ENCODE measurements at regions of chr6 and their contacts with region 1.

Region 1: DNA sequence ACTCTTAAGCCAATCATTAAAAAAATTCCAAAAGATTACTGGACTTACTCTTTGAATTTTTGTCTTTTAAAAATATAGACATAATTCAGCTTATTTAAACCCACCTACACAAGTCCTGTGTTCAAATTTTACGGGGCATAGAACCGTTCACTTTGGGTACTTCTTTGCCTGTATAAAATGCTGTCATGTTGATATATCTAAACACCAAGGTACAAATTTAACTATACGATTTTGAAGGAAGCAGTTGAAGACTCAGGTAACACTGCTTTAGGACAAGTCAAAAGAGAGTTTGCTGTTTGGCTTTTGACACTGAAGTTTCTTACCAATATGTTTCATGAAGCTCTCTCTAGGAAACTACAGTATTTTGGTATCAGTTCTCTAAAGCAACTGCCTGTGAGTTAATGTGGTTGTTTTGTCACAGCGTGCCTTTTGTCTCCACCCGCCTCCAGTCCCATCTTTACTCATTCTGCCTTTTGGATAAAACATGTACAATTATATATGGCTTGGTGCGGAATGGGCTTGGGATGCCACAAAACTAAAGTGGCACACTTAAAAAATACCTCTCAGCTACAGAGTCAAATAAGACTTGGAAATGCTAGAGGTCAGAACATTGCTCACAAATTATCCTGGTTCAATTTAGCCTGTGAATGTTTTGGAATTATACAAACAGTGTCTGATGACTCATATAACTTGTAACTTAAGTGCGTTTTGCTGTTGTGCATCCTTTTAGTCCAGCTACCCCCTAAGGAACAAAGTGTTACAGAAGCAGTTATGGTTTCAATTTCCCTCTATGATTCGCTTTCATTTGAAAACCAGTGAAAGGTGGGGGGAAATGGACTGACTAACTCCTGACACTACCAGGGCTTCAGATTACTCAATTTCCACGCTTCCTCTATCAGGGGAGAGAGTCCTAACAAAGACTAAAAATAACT is 38.7 kb downstream of the RGS17 start:
- DNase-seq: peak; percentile 43
- ATAC-seq: peak; percentile 91
- H3K4me3 ChIP-seq: 0 out of 2 replicates have a peak overlapping the region, but pooled peaks have one; percentile 44
- H3K27ac ChIP-seq: peak overlapping the region; percentile 10; the same call in 1 of the 2 replicates
- H3K4me1 ChIP-seq: no peaks in the 10 kb centered on the region; the same call in 1 of the 2 replicates
- H3K27me3 ChIP-seq: no peaks in the 10 kb centered on the region
- CTCF ChIP-seq: no peak
- EP300 ChIP-seq: peak in 1 of 2 experiments; percentile 45; a peak in 2 of 4 replicates
- POLR2A ChIP-seq: no peak
- RAD21 ChIP-seq: no peak

Region 2: DNA sequence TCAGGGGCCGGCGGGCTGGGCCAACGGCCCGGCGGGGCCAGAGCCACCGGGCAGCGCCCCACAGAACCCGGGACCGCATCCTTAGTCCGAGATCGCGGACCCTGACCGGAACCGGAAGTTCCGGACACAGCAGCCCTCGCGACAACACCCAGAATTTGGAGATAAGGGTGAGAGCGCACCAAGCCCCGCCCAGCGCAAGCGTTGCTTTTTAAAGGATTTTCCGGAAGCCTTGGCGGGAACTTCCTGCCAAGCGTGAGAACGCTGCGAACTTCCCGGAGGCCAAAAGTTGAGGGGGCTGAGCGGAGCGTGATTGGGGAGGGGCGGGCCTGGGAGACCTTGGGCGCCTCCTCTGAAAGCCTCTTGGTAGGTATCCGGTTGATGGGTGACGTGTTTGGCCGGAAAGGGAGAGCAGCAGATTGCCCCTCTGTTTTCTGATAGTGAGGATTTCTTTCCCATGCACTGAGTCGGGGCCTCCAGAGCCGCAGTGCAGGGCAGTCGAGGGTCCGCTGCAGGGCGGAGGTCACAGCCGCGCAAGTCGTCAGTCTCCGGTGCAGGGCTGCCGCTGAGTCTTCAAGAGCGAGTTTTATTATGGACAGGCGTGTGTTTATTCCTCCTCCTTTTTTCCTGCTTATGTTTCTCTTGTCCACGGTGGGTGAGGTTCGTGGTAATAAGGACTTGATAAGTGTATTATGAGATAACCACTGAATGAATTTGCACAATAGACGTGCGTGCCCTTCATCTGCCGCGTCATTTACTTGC is 89.6 kb before region 1 on chr6 and contains the start of gene MTRF1L:
- CTCF ChIA-PET with region 1: interaction called, 6 read pairs
- POLR2A ChIA-PET with region 1: no interaction called
- RAD21 ChIA-PET with region 1: no interaction called
- SMC1A ChIA-PET with region 1: no interaction called
- in situ Hi-C with region 1: no loop called
- intact Hi-C with region 1: loop called (anchors 2 kb)
- DNase-seq: peak; percentile 82
- ATAC-seq: peak; percentile 96
- H3K4me3 ChIP-seq: peak within 1 kb of the TSS; percentile 84
- H3K27ac ChIP-seq: peak within 1 kb of the TSS; percentile 61
- H3K4me1 ChIP-seq: no peaks in the 10 kb centered on the region
- H3K27me3 ChIP-seq: no peaks in the 10 kb centered on the region
- CTCF ChIP-seq: no peak
- EP300 ChIP-seq: no peak
- POLR2A ChIP-seq: peak; percentile 66; the same call in 1 of the 2 replicates
- RAD21 ChIP-seq: no peak
- polyA plus RNA-seq, gene MTRF1L: 5.1 to 9.0 TPM

Region 3: DNA sequence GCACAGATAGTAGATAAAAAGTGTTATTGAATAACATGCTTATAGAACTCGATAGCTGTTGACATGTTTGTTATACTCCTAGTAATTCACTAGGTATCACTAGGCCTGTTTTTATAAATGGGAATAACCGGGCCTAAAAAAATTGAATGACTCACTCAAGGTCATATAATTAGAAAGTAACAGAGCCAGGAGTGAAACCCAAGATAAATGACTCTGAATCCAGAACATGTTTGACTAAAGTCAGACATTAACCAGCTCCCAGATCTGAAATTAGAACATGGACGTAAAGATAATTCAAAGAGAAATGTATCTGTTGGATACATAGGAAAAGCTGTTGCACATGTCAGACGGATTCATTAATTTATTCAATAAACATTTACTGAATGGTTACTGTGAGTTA is 11.9 kb after region 1 on chr6:
- CTCF ChIA-PET with region 1: interaction called, 7 read pairs
- POLR2A ChIA-PET with region 1: interaction called, 4 read pairs
- RAD21 ChIA-PET with region 1: interaction called, 5 read pairs
- SMC1A ChIA-PET with region 1: interaction called, 15 read pairs
- in situ Hi-C with region 1: no loop called
- intact Hi-C with region 1: no loop called
- DNase-seq: no peak
- ATAC-seq: no peak; the same call in none of the 3 replicates
- H3K4me3 ChIP-seq: no peak overlapping the region
- H3K27ac ChIP-seq: no peak overlapping the region
- H3K4me1 ChIP-seq: no peaks in the 10 kb centered on the region
- H3K27me3 ChIP-seq: no peaks in the 10 kb centered on the region
- CTCF ChIP-seq: no peak
- EP300 ChIP-seq: no peak
- POLR2A ChIP-seq: no peak
- RAD21 ChIP-seq: no peak

Region 4: DNA sequence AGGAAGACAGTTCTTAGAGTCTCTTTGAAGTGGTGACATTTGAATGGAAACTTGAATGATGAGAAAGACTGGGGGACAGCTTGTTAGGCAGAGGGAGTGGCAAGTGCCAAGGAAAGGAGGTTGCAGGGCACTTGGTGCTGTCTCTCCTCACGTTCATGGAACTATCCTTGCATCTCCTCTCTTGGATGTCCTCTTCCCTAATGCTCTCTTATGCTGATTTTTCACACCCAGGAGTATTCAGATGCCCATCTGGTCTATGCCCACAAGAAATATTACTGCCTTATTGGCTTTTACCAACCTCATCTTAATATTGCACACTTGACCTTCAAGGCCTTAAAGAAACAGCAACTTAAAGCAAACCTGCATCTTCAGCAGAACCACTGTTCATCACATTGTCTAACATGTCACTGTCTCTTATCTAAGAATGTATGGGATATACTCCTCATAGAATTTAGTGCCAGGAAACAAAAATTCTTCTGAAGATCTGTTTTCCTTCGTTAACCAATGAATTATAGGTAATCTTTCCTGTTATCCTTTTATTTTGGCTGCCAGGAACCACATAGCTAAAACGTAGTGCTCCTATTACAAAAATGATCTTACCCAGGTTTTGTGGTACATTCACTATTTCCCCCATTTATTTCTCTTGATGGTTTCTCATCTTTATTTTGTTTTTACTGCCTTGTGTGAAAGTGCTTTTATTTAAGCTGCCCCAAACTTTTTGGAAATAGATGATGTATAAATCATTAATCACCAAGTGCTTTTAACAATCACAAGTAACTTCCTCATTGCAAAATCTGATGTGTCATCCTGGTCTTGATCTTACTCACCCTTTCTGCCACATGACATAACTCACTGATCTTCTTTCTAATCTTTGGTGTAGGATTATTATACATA is 25.9 kb after region 1 on chr6:
- CTCF ChIA-PET with region 1: interaction called, 5 read pairs
- POLR2A ChIA-PET with region 1: interaction called, 11 read pairs
- RAD21 ChIA-PET with region 1: interaction called, 6 read pairs
- SMC1A ChIA-PET with region 1: interaction called, 22 read pairs
- in situ Hi-C with region 1: no loop called
- intact Hi-C with region 1: loop called (anchors 2 kb)
- DNase-seq: peak; percentile 57
- ATAC-seq: peak; percentile 97
- H3K4me3 ChIP-seq: no peak overlapping the region
- H3K27ac ChIP-seq: no peak overlapping the region
- H3K4me1 ChIP-seq: no peaks in the 10 kb centered on the region
- H3K27me3 ChIP-seq: no peaks in the 10 kb centered on the region
- CTCF ChIP-seq: no peak
- EP300 ChIP-seq: peak; percentile 78 to 84
- POLR2A ChIP-seq: no peak
- RAD21 ChIP-seq: no peak

Region 5: GRCh38 chr6:153328169-153328568 is 235.8 kb after region 1 on chr6:
- CTCF ChIA-PET with region 1: no interaction called
- POLR2A ChIA-PET with region 1: no interaction called
- RAD21 ChIA-PET with region 1: no interaction called
- SMC1A ChIA-PET with region 1: no interaction called
- in situ Hi-C with region 1: no loop called
- intact Hi-C with region 1: no loop called
- DNase-seq: no peak
- ATAC-seq: no peak
- H3K4me3 ChIP-seq: no peak overlapping the region
- H3K27ac ChIP-seq: no peak overlapping the region
- H3K4me1 ChIP-seq: no peaks in the 10 kb centered on the region
- H3K27me3 ChIP-seq: no peaks in the 10 kb centered on the region
- CTCF ChIP-seq: no peak
- EP300 ChIP-seq: no peak
- POLR2A ChIP-seq: no peak
- RAD21 ChIP-seq: no peak

Measured in GM12878 (cell line).